GM12878 (cell line): ENCODE measurements at regions of chrX and their contacts with region 1.

Region 1: GRCh38 chrX:150683536-150684146 is 9.6 kb upstream of the MTMR1 start:
- DNase-seq: no peak
- ATAC-seq: peak; percentile 76
- H3K4me3 ChIP-seq: no peak overlapping the region
- H3K27ac ChIP-seq: no peak overlapping the region
- H3K4me1 ChIP-seq: no peaks in the 10 kb centered on the region
- H3K27me3 ChIP-seq: no peaks in the 10 kb centered on the region
- CTCF ChIP-seq: peak; percentile 54 to 64 (median 55); a peak in 5 of 6 replicates
- EP300 ChIP-seq: no peak
- POLR2A ChIP-seq: no peak
- RAD21 ChIP-seq: peak; percentile 60

Region 2: DNA sequence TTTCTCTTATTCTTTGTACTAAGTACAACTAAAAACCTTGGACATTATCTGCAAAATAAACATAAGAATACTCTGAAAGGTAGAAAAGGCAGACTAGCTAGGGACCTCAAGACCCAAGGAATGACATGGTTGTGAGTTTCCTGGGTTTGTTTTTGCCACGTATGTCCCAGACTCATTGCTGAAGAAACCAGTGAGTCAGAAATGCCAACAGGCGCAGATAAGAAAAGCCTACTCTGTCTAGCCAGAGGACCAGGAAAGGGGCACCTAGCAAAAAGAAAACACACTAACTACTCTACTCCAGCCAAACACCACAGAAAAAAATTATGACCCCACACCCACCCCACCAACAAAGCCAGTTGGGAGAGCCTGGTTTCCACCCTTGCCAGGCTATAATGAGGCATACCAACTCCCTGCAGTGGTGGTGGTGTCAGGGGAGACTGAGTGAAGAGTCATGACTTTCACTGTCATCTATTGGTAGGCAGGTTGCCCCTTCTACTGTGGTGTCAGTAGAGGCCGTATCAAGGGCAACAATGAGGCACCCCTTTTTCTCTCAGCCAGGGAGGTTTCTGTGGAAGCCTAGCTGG is 20.5 kb after region 1 on chrX:
- CTCF ChIA-PET with region 1: interaction called, 16 read pairs
- POLR2A ChIA-PET with region 1: no interaction called
- RAD21 ChIA-PET with region 1: interaction called, 6 read pairs
- SMC1A ChIA-PET with region 1: interaction called, 19 read pairs
- in situ Hi-C with region 1: no loop called
- intact Hi-C with region 1: no loop called
- DNase-seq: no peak
- ATAC-seq: no peak
- H3K4me3 ChIP-seq: no peak overlapping the region
- H3K27ac ChIP-seq: no peak overlapping the region
- H3K4me1 ChIP-seq: no peaks in the 10 kb centered on the region
- H3K27me3 ChIP-seq: no peaks in the 10 kb centered on the region
- CTCF ChIP-seq: no peak
- EP300 ChIP-seq: no peak
- POLR2A ChIP-seq: no peak
- RAD21 ChIP-seq: no peak